A673 (cell line): ENCODE measurements at regions of chr13 and their contacts with region 1.

Region 1: GRCh38 chr13:43159026-43159461 is 135.7 kb downstream of the DNAJC15 start:
- DNase-seq: peak; percentile 63
- H3K4me3 ChIP-seq: no peak overlapping the region
- H3K27ac ChIP-seq: no peak overlapping the region
- H3K4me1 ChIP-seq: no peaks in the 10 kb centered on the region
- H3K27me3 ChIP-seq: no peaks in the 10 kb centered on the region
- CTCF ChIP-seq: no peak

Region 2: GRCh38 chr13:43196086-43196621 is 37.1 kb after region 1 on chr13:
- CTCF ChIA-PET with region 1: no interaction called
- POLR2A ChIA-PET with region 1: interaction called, 10 read pairs
- intact Hi-C with region 1: no loop called
- DNase-seq: peak; percentile 46
- H3K4me3 ChIP-seq: no peak overlapping the region
- H3K27ac ChIP-seq: no peak overlapping the region
- H3K4me1 ChIP-seq: peaks cover 5% of the 10 kb centered on the region
- H3K27me3 ChIP-seq: no peaks in the 10 kb centered on the region
- CTCF ChIP-seq: peak; percentile 43